ENCODE measurements at regions of chr1 and their contacts with region 1.

Region 1: DNA sequence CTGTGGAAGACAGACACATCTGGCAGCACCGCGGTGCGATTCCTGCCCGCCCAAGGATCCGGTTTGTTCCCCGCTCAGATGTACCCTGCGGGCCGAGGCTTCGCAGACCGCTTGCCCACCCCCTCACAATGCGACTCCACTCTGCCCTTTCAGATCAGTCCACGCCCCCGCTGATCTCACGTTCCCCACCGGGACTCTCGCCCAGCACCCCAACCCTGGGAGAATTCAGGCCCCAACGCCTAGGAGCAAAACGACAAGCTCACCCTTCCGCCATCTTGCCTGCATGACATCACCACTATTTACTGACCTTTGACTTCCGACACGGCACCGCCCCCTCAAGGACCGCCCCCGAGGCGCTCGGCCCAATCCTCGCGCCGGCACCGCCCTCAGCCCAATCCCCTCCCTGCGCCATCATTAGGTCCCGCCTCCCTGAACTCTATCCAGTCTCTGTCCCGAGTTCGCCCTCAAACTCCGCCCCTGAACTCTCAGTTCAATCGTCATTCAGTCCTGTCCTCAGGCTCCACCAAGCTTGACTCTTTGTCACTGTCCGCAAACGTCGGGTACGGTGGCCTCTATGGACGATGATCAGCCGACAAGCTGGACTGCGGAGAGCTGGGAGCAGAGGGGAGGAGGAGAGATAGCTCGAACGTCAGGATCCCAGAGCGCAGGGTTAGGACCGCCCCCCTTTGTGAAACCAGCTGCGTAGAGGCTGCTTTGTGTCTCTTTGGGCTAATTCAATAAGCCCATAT is at the start of gene BSDC1:
- DNase-seq: peak; percentile 99
- ATAC-seq: peak; percentile 99
- H3K4me3 ChIP-seq: peak within 1 kb of the TSS; percentile 66 to 94 (median 84)
- H3K4me3 Mint-ChIP-seq: peak within 1 kb of the TSS; percentile 99
- H3K27ac ChIP-seq: peak within 1 kb of the TSS; percentile 91
- H3K27ac Mint-ChIP-seq: peak within 1 kb of the TSS; percentile 99
- H3K4me1 ChIP-seq: peaks cover 14 to 27% of the 10 kb centered on the region in 2 donors
- H3K4me1 Mint-ChIP-seq: peaks cover 31% of the 10 kb centered on the region
- H3K27me3 ChIP-seq: no peaks in the 10 kb centered on the region
- H3K27me3 Mint-ChIP-seq: peaks cover 3% of the 10 kb centered on the region
- CTCF ChIP-seq: no peak
- total RNA-seq, gene BSDC1: 117 and 124 TPM in 2 replicates

Region 2: DNA sequence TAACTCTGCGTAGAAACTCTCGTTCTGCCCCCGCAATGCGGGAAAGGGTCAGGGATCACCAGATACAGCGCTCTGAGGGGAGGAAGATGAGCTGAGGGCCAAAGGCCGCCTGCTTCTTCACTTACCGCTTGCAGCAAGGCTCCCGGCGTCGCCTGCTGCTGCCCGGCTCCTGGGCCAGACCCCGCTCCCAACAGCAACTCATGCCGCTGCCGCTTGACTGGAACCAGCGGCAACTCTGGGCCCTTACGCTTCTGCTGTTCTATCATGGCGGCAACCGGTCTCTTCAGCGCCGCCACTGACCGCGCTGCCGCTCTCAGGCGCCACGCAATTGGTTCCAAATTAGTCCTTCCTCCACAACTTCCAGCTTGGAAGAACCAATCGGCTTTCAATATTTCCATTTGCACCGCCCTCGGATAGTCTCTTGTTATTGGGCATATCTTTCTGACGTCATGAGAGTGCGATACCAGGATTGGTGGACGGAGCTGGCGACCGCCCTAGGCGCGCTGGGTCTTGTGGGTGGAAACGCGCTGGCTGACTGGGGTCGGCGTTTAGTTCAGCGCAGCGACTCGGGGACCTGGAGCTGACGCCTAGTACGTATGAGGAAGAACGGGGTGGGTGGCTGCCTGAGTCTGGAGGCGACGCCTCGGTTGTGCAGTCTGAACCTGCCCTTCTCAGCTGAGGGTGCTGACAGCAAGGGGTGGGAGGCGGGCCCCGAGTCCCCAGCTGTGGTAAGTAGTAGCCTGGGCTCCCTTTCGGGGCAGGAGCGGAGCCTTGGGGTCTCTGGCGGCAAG is 1097.6 kb before region 1 on chr1 and contains the starts of genes SNRNP40 and ZCCHC17:
- CTCF ChIA-PET with region 1: no interaction called
- POLR2A ChIA-PET with region 1: no interaction called
- intact Hi-C with region 1: loop called (anchors 2 kb)
- DNase-seq: peak; percentile 98
- ATAC-seq: peak; percentile 97
- H3K4me3 ChIP-seq: peak within 1 kb of the TSS; percentile 68 to 99 (median 77)
- H3K4me3 Mint-ChIP-seq: no peak within 1 kb of the TSS
- H3K27ac ChIP-seq: peak within 1 kb of the TSS; percentile 82 to 93
- H3K27ac Mint-ChIP-seq: peak within 1 kb of the TSS; percentile 63
- H3K4me1 ChIP-seq: peaks cover 23 to 25% of the 10 kb centered on the region in 2 donors
- H3K4me1 Mint-ChIP-seq: peaks cover 24% of the 10 kb centered on the region
- H3K27me3 ChIP-seq: no peaks in the 10 kb centered on the region
- H3K27me3 Mint-ChIP-seq: no peaks in the 10 kb centered on the region
- CTCF ChIP-seq: no peak
- total RNA-seq, gene SNRNP40: 65.6 and 67.7 TPM in 2 replicates
- total RNA-seq, gene ZCCHC17: 20.3 and 21.5 TPM in 2 replicates

Region 3: DNA sequence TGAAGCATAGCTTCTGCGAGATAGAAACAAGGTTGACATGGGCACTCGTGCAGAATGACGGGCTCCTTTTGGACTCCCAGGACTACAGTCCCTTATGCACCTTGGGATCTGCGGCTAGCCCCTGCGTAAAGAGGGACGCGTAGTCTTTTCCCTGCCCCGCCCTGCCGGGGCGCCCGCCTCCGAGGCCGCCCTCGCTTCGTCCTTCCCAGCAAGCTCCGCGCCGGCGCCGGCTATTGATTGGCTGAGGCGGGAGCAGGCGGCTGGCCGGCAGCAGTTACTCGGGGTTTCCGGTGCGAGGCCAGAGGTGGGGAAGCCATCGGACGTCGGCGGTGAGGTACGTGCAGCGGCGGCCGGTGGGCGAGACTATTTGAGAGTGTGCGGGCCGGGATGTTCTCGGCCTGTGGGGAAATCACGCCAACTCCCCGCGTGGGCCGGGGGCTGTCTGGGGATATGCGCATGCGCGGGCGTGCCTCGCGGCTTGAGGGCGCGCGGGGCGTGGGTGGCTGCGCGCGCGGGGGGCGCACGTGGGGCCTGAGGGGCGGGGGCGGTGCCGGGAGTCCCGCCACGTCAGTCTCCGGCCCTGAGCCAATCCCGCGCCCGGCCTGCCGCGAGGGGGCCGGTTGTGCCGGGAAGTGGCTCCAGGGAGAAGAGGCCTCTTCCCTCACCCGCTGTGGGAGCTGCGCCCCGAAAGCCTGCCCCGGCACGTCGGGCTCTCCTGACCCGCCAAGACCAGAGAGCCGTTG is 214.7 kb before region 1 on chr1 and contains the start of gene TXLNA:
- CTCF ChIA-PET with region 1: interaction called, 3 read pairs
- POLR2A ChIA-PET with region 1: no interaction called
- intact Hi-C with region 1: loop called (anchors 1 kb)
- DNase-seq: peak; percentile 94
- ATAC-seq: peak; percentile 90
- H3K4me3 ChIP-seq: peak within 1 kb of the TSS; percentile 71 to 92 (median 76)
- H3K4me3 Mint-ChIP-seq: peak within 1 kb of the TSS; percentile 96
- H3K27ac ChIP-seq: peak within 1 kb of the TSS; percentile 76 to 90
- H3K27ac Mint-ChIP-seq: peak within 1 kb of the TSS; percentile 99
- H3K4me1 ChIP-seq: peaks cover 21 to 31% of the 10 kb centered on the region in 2 donors
- H3K4me1 Mint-ChIP-seq: peaks cover 35% of the 10 kb centered on the region
- H3K27me3 ChIP-seq: no peaks in the 10 kb centered on the region
- H3K27me3 Mint-ChIP-seq: no peaks in the 10 kb centered on the region
- CTCF ChIP-seq: no peak
- total RNA-seq, gene TXLNA: 38.3 and 38.4 TPM in 2 replicates

Region 4: GRCh38 chr1:32200226-32201010 is 193.9 kb before region 1 on chr1 and contains the start of gene CCDC28B:
- CTCF ChIA-PET with region 1: no interaction called
- POLR2A ChIA-PET with region 1: no interaction called
- intact Hi-C with region 1: loop called (anchors 1 kb)
- DNase-seq: peak; percentile 77
- ATAC-seq: peak; percentile 58
- H3K4me3 ChIP-seq: peak within 1 kb of the TSS; percentile 48 to 85 (median 79)
- H3K4me3 Mint-ChIP-seq: peak within 1 kb of the TSS; percentile 88
- H3K27ac ChIP-seq: peak within 1 kb of the TSS; percentile 78 to 88
- H3K27ac Mint-ChIP-seq: peak within 1 kb of the TSS; percentile 86
- H3K4me1 ChIP-seq: peaks cover 17 to 36% of the 10 kb centered on the region in 2 donors
- H3K4me1 Mint-ChIP-seq: peaks cover 33% of the 10 kb centered on the region
- H3K27me3 ChIP-seq: no peaks in the 10 kb centered on the region
- H3K27me3 Mint-ChIP-seq: no peaks in the 10 kb centered on the region
- CTCF ChIP-seq: no peak
- total RNA-seq, gene CCDC28B: 7.8 and 10.2 TPM in 2 replicates

Region 5: DNA sequence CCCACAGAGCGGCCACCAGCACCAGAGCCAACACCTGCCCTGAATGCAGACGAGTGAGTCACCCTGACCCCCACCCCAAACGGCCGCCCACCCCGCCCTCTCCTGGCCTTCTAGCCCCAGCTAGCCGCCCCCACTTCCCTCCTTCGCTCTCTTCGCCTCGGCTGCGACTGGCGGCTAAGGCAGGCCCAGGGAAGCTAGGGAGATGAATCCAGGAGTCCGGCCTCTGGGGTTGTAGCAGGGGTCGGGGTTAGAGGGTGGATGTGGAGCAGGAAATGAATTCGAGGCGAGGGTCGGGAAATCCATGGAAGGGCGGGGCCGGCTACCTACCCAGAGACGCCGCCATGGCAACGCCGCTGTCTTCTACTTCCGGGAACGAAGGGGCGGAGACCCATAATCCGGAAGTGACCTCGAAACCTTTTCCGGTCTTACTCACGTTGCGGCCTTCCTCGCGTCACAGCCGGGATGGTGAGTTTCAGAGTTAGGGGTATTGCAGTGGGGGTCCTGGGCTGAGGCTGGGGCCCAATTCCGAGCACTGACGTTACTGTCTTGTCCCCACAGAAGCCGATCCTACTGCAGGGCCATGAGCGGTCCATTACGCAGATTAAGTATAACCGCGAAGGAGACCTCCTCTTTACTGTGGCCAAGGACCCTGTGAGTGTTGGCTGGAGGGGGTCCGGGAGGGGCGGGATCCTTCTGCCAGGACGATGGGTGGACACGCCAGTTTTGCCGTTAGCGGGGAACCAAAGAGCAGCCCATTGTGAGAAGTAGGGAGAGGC is 172.1 kb before region 1 on chr1 and contains the starts of genes EIF3I and TMEM234:
- CTCF ChIA-PET with region 1: interaction called, 3 read pairs
- POLR2A ChIA-PET with region 1: interaction called, 5 read pairs
- intact Hi-C with region 1: loop called (anchors 1 kb)
- DNase-seq: peak; percentile 94
- ATAC-seq: peak; percentile 86
- H3K4me3 ChIP-seq: peak within 1 kb of the TSS; percentile 61 to 99 (median 93)
- H3K4me3 Mint-ChIP-seq: peak within 1 kb of the TSS; percentile 97
- H3K27ac ChIP-seq: peak within 1 kb of the TSS; percentile 72 to 94
- H3K27ac Mint-ChIP-seq: peak within 1 kb of the TSS; percentile 98
- H3K4me1 ChIP-seq: peaks cover 28 to 30% of the 10 kb centered on the region in 2 donors
- H3K4me1 Mint-ChIP-seq: peaks cover 43% of the 10 kb centered on the region
- H3K27me3 ChIP-seq: no peaks in the 10 kb centered on the region
- H3K27me3 Mint-ChIP-seq: no peaks in the 10 kb centered on the region
- CTCF ChIP-seq: no peak
- total RNA-seq, gene EIF3I: 87.0 and 91.0 TPM in 2 replicates
- total RNA-seq, gene TMEM234: 50.4 and 60.8 TPM in 2 replicates

Region 6: GRCh38 chr1:32508751-32509140 is 114.4 kb after region 1 on chr1:
- CTCF ChIA-PET with region 1: no interaction called
- POLR2A ChIA-PET with region 1: no interaction called
- intact Hi-C with region 1: no loop called
- DNase-seq: no peak
- ATAC-seq: no peak
- H3K4me3 ChIP-seq: no peak overlapping the region
- H3K4me3 Mint-ChIP-seq: no peak overlapping the region
- H3K27ac ChIP-seq: no peak overlapping the region
- H3K27ac Mint-ChIP-seq: no peak overlapping the region
- H3K4me1 ChIP-seq: no peaks in the 10 kb centered on the region
- H3K4me1 Mint-ChIP-seq: no peaks in the 10 kb centered on the region
- H3K27me3 ChIP-seq: peaks cover 0 to 6% (median 0%) of the 10 kb centered on the region in 4 experiments
- H3K27me3 Mint-ChIP-seq: peaks cover 37% of the 10 kb centered on the region
- CTCF ChIP-seq: no peak

Region 7: GRCh38 chr1:32650752-32651460 is 256.6 kb after region 1 on chr1 and contains the start of gene RBBP4:
- CTCF ChIA-PET with region 1: no interaction called
- POLR2A ChIA-PET with region 1: no interaction called
- intact Hi-C with region 1: loop called (anchors 1 kb)
- DNase-seq: peak; percentile 99
- ATAC-seq: peak; percentile 83
- H3K4me3 ChIP-seq: peak within 1 kb of the TSS; percentile 77 to 96 (median 81)
- H3K4me3 Mint-ChIP-seq: peak within 1 kb of the TSS; percentile 98
- H3K27ac ChIP-seq: peak within 1 kb of the TSS; percentile 97 to 100
- H3K27ac Mint-ChIP-seq: peak within 1 kb of the TSS; percentile 100
- H3K4me1 ChIP-seq: peaks cover 21 to 31% of the 10 kb centered on the region in 2 donors
- H3K4me1 Mint-ChIP-seq: peaks cover 55% of the 10 kb centered on the region
- H3K27me3 ChIP-seq: no peaks in the 10 kb centered on the region
- H3K27me3 Mint-ChIP-seq: no peaks in the 10 kb centered on the region
- CTCF ChIP-seq: no peak
- total RNA-seq, gene RBBP4: 192 and 204 TPM in 2 replicates